Activated CD8-positive, alpha-beta T cell treated with anti-CD3 and anti-CD28 coated beads for 36 hours (primary cell): ENCODE measurements at regions of chr19 and their contacts with region 1.

Region 1: GRCh38 chr19:55467236-55468053 is 2.9 kb upstream of the C19orf85 start:
- DNase-seq: peak; percentile 69
- ATAC-seq: peak; percentile 98
- H3K4me3 Mint-ChIP-seq: no peak overlapping the region
- H3K27ac Mint-ChIP-seq: no peak overlapping the region
- H3K4me1 Mint-ChIP-seq: peaks cover 5% of the 10 kb centered on the region
- H3K27me3 Mint-ChIP-seq: no peaks in the 10 kb centered on the region
- CTCF ChIP-seq: peak; percentile 98

Region 2: GRCh38 chr19:55452749-55453346 is 14.6 kb before region 1 on chr19:
- CTCF ChIA-PET with region 1: interaction called, 12 read pairs
- POLR2A ChIA-PET with region 1: no interaction called
- intact Hi-C with region 1: no loop called
- DNase-seq: peak; percentile 56
- ATAC-seq: peak; percentile 49
- H3K4me3 Mint-ChIP-seq: no peak overlapping the region
- H3K27ac Mint-ChIP-seq: no peak overlapping the region
- H3K4me1 Mint-ChIP-seq: peaks cover 10% of the 10 kb centered on the region
- H3K27me3 Mint-ChIP-seq: peaks cover 25% of the 10 kb centered on the region
- CTCF ChIP-seq: no peak

Region 3: DNA sequence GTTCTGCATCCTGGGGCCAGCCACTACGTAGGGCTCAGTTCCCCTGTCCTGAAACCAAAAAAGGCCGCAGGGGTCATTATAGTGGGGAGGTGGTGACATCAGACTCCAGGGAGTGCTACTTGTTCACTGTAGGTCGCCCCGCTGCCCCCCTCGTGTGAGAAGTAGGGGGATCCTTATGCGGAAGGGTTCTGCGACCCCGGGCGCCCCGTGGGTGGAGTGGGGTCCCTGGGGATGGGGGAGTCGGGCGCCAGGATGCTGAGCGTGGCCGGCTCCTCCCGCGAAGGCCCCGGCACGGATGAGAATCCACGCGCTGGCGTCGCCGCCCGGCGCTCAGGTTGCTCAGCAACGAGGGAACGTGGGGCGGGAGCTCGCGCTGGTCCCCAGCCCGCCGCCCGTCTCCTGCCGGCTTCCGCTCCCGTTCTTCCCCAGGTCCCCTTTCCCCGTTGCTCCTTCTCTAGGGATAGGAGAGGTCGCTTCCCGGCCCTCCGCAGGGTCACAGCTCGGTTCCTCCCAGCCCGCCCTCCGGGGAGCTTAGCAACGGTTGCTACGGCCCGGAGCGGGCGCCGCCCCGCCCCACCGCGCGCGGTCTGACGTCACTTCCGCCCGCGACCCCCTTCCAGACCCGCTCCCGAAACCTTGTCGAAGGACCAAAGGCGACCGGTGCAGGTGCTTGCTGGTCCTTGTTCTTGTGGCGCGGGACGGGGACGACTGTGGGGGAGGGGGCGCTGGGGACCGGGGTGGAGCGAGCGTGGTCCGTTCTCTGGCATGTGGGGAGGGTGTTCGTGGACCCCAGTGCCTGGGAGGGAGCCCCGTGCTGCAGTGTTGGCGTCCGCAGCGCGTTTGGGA is 17.4 kb after region 1 on chr19 and contains the start of gene NAT14:
- CTCF ChIA-PET with region 1: interaction called, 10 read pairs
- POLR2A ChIA-PET with region 1: no interaction called
- intact Hi-C with region 1: no loop called
- DNase-seq: peak; percentile 67
- ATAC-seq: peak; percentile 69
- H3K4me3 Mint-ChIP-seq: peak within 1 kb of the TSS; percentile 82
- H3K27ac Mint-ChIP-seq: peak within 1 kb of the TSS; percentile 84
- H3K4me1 Mint-ChIP-seq: peaks cover 22% of the 10 kb centered on the region
- H3K27me3 Mint-ChIP-seq: no peaks in the 10 kb centered on the region
- CTCF ChIP-seq: no peak
- total RNA-seq, gene NAT14: 18.9 to 19.9 TPM